GM13977 (cell line): ENCODE measurements at regions of chr10 and their contacts with region 1.

Region 1: DNA sequence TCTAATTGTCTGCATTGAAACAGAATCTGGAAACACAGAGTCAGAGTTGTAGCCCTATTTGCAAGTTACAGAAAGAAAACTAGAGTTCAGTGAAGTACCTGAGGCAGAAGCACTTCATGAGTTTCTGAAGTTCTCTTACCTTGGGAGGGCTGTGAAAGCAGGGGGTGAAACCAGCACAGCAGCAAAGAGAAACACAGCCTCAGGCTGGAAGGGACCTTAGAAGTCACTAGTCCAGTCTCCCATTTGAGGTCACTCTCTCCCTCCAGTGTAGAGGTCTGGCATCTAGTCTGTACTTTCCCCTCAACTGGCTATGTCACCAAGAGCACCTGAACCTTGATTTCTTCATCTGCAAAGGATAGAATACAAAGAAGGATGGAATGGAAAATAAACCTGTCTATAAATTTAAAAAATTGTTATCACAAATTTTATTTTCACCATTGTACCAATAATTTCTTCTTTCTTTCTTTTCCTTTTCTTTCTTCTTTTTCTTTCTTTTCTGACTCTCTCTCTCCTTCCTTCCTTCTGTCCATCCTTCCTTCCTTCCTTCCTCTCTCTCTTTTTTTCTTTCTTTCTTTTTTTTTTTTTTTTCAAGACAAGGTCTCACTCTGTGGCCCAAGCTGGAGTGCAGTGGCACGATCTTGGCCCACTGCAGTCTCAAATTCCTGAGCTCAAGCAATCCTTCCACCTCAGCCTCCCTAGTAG is 36.5 kb upstream of the SORBS1 start:
- DNase-seq: no peak
- CTCF ChIP-seq: no peak

Region 2: DNA sequence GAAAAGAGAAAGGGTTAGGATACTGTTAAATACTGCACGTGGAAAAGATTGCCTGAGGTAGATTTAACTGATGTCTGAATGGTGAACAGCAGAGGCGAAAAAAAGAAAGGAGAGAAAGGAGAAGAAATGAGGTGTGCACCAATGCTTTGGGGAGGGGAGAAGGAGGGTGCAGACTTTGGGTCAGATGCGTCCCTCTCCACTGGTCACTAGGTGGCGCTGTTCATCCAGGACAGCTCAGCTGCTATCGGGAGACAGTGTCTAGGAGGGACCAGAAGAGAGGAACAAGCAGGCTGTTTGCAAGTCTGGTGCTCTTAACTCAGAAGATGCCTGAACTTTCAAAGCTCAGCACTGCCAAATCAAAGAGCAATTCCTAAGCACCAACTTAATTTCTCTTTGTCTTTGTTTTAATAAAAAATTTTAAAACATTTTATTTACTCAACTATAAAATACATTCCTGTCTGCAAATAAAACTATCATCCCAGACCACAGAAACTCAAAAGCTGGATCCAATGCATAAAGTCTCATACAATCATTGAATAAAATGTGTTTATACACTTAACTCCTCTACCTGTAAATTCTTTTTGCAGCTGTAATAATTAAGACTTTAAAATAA is 222.9 kb before region 1 on chr10:
- in situ Hi-C with region 1: loop called (anchors 10 kb)
- DNase-seq: peak; percentile 71
- CTCF ChIP-seq: peak; percentile 95

Region 3: GRCh38 chr10:95783741-95784140 is 186.1 kb after region 1 on chr10:
- in situ Hi-C with region 1: no loop called
- DNase-seq: peak; percentile 23
- CTCF ChIP-seq: no peak